Heart left ventricle (tissue), 16 donors: ENCODE measurements at regions of chr14 and their contacts with region 1.

Region 1: DNA sequence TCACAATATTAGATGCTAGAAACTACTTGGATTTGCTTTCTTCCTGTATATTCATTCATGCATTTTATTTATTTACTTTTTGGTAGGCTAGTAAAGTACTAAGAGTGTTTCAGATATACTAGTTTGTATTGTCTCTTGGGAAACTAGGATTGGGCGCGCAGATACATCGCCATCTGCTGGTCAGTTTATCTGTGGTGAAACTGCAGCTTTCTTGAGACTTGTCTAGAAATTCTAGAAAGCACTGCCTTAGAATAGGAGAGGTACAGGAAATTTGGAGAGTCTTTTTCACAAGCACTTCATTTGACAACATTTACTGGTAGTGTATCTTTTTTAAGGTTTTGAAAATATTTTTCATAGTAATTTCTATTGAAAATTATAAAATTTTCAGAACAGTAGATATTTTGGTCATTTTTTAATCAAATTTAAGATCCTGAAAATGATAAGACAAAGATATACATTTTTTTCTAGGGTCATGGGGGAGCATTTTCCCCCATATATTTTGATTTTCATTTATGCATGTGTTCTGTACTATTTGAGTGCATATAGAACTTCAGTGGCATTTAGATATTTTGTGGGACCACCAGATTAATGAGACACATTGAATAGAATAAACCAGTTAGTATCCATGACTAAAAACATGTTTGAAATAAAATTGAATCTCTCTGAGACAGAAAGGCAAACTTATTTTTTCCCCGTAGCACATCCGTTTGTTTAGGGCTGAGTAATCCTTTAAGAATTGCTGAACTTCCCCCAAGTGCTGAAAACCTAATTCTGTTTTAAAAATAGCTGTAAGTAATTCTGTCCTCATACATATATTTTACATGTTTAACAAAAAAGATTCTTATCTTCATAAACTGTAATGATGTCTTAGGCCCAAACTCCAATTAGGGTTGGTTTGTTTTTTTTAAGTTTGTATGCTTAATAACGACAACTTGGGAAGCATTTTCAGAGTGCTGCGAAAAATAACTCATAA is 44.5 kb downstream of the SLC38A6 start:
- DNase-seq: peak; percentile 40 to 47 (median 45)
- ATAC-seq: peak in 2 of 4 donors; percentile 54 to 57
- H3K4me3 ChIP-seq: no peak overlapping the region
- H3K27ac ChIP-seq: no peak overlapping the region
- H3K4me1 ChIP-seq: no peaks in the 10 kb centered on the region
- H3K27me3 ChIP-seq: no peaks in the 10 kb centered on the region
- CTCF ChIP-seq: peak; percentile 81 to 96 (median 88)
- POLR2A ChIP-seq: no peak

Region 2: GRCh38 chr14:60622917-60623257 is 402.6 kb before region 1 on chr14:
- intact Hi-C with region 1: loop called (anchors 1 to 5 kb)
- DNase-seq: no peak
- ATAC-seq: no peak
- H3K4me3 ChIP-seq: no peak overlapping the region
- H3K27ac ChIP-seq: peak overlapping the region in 1 of 12 donors; percentile 15
- H3K4me1 ChIP-seq: no peaks in the 10 kb centered on the region
- H3K27me3 ChIP-seq: peaks cover 0 to 19% (median 4%) of the 10 kb centered on the region in 9 donors
- CTCF ChIP-seq: no peak
- POLR2A ChIP-seq: no peak

Region 3: DNA sequence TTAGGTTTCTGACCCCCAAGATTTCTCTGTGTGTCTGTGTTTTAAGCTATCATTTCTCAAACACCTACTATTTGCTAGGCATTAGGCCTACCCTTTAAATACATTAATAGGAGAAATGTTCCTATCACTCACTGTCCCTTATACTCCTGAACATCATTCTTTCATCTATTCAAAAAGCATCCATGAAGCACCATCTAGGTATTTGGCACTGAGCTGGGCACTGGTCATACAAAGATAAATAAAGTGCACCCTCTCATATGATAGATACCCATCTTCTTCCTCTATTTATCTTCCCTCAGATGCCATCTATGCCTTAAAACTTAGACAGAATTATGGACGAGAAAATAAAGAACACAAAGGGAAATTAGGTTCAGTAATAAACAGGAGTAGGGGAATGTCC is 396.6 kb before region 1 on chr14:
- intact Hi-C with region 1: loop called (anchors 1 to 5 kb)
- DNase-seq: no peak
- ATAC-seq: no peak
- H3K4me3 ChIP-seq: no peak overlapping the region
- H3K27ac ChIP-seq: no peak overlapping the region
- H3K4me1 ChIP-seq: no peaks in the 10 kb centered on the region
- H3K27me3 ChIP-seq: peaks cover 0 to 52% (median 4%) of the 10 kb centered on the region in 9 donors
- CTCF ChIP-seq: no peak
- POLR2A ChIP-seq: no peak

Region 4: DNA sequence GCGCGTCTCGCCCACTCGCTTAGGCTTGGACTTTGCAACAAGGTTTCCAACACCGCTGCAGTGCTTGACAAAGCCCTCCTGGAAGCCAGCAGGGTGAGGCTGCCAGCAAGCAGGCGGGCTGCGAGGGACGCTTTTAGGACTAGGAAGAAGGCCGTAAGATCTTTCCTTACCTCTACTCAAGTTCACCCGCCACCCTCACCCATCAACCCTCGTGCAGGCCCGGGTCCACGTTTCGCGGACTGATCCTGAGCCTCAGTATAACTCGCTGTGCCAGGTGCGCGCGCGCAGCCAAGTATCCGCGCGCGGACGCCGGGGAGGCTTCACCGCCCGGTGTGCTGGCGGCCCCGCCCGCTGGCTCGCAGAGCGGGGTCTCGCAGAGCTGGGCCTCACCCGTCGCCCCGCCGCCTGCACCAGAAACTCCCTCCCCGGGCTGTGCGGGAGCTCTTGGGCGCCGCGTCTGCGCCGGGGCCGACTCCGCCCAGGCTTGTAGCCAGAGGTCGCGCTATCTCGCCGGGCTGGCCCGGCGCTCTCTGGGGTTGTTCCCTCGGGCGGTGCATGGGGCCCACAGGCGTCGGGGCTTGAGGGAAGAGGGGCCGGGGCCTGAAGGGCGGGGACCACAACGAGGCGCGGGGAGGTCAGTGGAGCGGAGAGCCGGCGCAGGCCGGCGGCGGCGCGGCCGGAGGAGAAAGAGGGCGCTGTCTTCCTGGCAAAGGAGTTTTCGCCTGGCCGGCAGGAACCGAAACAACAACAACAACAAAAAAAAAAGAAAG is 368.7 kb before region 1 on chr14:
- intact Hi-C with region 1: loop called in 4 of 10 experiments (anchors 2 to 10 kb)
- DNase-seq: peak in 2 of 5 donors; percentile 49 to 63
- ATAC-seq: peak in 3 of 4 donors; percentile 73 to 85 (median 81)
- H3K4me3 ChIP-seq: peak overlapping the region; percentile 50 to 73 (median 62)
- H3K27ac ChIP-seq: no peak overlapping the region
- H3K4me1 ChIP-seq: peaks cover 2 to 46% (median 23%) of the 10 kb centered on the region in 12 donors
- H3K27me3 ChIP-seq: peaks cover 43 to 100% (median 96%) of the 10 kb centered on the region in 9 donors
- CTCF ChIP-seq: peak in 10 of 12 donors; percentile 14 to 62 (median 38)
- POLR2A ChIP-seq: no peak

Region 5: GRCh38 chr14:60999536-60999935 is 26.0 kb before region 1 on chr14:
- intact Hi-C with region 1: no loop called
- DNase-seq: no peak
- ATAC-seq: no peak
- H3K4me3 ChIP-seq: no peak overlapping the region
- H3K27ac ChIP-seq: no peak overlapping the region
- H3K4me1 ChIP-seq: no peaks in the 10 kb centered on the region
- H3K27me3 ChIP-seq: no peaks in the 10 kb centered on the region
- CTCF ChIP-seq: no peak
- POLR2A ChIP-seq: no peak

Region 6: DNA sequence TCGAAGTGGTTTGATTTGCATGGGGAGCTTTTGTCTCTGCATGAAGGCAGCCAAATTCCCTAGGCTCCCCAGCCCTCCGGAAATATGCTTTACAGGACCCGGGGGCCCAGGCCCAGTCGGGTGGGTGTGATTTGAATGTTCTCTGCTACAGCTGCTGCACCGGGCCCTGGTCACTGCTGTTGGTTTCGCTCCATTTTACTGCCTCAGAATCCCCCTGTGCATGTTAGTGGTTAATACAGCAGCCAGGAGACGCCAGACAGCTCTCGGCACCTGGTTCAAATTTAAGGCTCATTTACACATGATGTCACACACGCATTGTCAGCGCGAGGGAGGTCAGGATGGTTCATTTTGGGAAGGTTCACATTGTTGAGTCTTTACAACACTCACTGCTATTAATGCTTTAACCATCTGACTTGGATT is 55.1 kb after region 1 on chr14:
- intact Hi-C with region 1: no loop called
- DNase-seq: peak in 3 of 5 donors; percentile 22 to 32 (median 23)
- ATAC-seq: peak in 2 of 4 donors; percentile 20 to 79
- H3K4me3 ChIP-seq: no peak overlapping the region
- H3K27ac ChIP-seq: no peak overlapping the region
- H3K4me1 ChIP-seq: peaks cover 0 to 2% (median 0%) of the 10 kb centered on the region in 12 donors
- H3K27me3 ChIP-seq: no peaks in the 10 kb centered on the region
- CTCF ChIP-seq: no peak
- POLR2A ChIP-seq: no peak

Region 7: GRCh38 chr14:61252369-61253063 is 227.0 kb after region 1 on chr14:
- intact Hi-C with region 1: loop called (anchors 1 to 10 kb)
- DNase-seq: peak in 4 of 5 donors; percentile 60 to 73 (median 67)
- ATAC-seq: peak; percentile 89 to 97 (median 96)
- H3K4me3 ChIP-seq: no peak overlapping the region
- H3K27ac ChIP-seq: no peak overlapping the region
- H3K4me1 ChIP-seq: peaks cover 0 to 5% (median 0%) of the 10 kb centered on the region in 12 donors
- H3K27me3 ChIP-seq: peaks cover 0 to 4% (median 0%) of the 10 kb centered on the region in 9 donors
- CTCF ChIP-seq: peak; percentile 64 to 89 (median 82)
- POLR2A ChIP-seq: no peak

Region 8: GRCh38 chr14:61388173-61388975 is 362.8 kb after region 1 on chr14:
- intact Hi-C with region 1: no loop called
- DNase-seq: no peak
- ATAC-seq: peak; percentile 20 to 77 (median 52)
- H3K4me3 ChIP-seq: no peak overlapping the region
- H3K27ac ChIP-seq: peak overlapping the region in 11 of 12 donors; percentile 30 to 81 (median 58)
- H3K4me1 ChIP-seq: peaks cover 5 to 90% (median 45%) of the 10 kb centered on the region in 12 donors
- H3K27me3 ChIP-seq: no peaks in the 10 kb centered on the region
- CTCF ChIP-seq: no peak
- POLR2A ChIP-seq: no peak